HepG2 (cell line): ENCODE measurements at regions of chr15 and their contacts with region 1.

Region 1: GRCh38 chr15:78241007-78241406 is 6.6 kb upstream of the ACSBG1 start:
- DNase-seq: peak; percentile 49
- ATAC-seq: peak; percentile 93
- H3K4me3 ChIP-seq: no peak overlapping the region
- H3K27ac ChIP-seq: no peak overlapping the region
- H3K4me1 ChIP-seq: peaks cover 32% of the 10 kb centered on the region
- H3K27me3 ChIP-seq: peaks cover 0 to 11% of the 10 kb centered on the region in 2 experiments; a peak in 1 of 5 replicates
- CTCF ChIP-seq: peak; percentile 92
- EP300 ChIP-seq: no peak
- POLR2A ChIP-seq: no peak
- RAD21 ChIP-seq: peak; percentile 77

Region 2: DNA sequence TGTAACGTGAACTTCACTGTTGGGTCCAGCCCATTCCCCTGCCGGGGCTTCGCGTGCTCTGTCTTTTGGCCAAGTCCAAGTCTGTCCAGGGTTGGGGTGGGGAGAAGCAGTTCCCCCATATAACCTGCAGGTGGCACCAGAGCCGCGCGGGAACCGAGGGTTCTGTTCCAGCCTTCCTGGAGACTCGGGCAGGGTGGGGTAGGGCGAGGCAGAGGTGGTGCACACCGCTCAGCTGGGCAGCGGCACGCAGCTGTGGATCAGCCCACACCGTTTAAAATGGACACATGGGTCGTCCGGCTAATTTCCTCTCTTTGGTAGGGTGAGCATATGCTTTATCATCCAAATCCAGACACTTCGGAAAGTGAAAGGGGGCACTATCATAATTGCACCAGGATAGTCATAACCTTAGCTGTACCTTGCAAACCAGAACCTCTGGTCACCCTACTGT is 281.6 kb before region 1 on chr15:
- CTCF ChIA-PET with region 1: no interaction called
- POLR2A ChIA-PET with region 1: no interaction called
- in situ Hi-C with region 1: loop called (anchors 25 kb)
- intact Hi-C with region 1: no loop called
- DNase-seq: peak; percentile 48
- ATAC-seq: peak; percentile 98
- H3K4me3 ChIP-seq: no peak overlapping the region; a peak in 1 of 6 replicates
- H3K27ac ChIP-seq: no peak overlapping the region
- H3K4me1 ChIP-seq: peaks cover 18% of the 10 kb centered on the region
- H3K27me3 ChIP-seq: no peaks in the 10 kb centered on the region
- CTCF ChIP-seq: peak; percentile 96
- EP300 ChIP-seq: no peak
- POLR2A ChIP-seq: no peak
- RAD21 ChIP-seq: peak; percentile 89

Region 3: DNA sequence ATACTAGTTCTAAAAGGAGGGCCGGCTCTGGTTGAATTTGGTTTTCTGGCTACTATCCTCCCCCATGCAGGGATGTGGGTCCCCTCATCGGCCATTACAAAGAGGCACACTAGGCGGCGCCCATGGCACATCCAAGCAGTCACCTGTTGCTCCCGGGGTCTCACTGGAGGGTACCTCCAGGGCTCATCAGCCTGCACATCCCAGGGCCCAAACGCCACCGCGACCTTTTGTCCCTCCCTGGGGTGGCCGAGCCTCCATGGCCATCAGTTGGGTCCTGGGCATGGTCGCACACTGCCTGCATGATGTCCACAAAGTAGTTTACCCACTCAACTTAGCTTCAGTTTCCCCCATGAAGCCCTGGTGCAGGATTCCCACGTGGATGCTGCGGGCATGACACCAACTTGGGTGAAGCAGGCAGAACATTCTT is 63.5 kb before region 1 on chr15:
- CTCF ChIA-PET with region 1: interaction called, 9 read pairs
- POLR2A ChIA-PET with region 1: no interaction called
- in situ Hi-C with region 1: loop called (anchors 5 kb)
- intact Hi-C with region 1: loop called (anchors 1 kb)
- DNase-seq: peak; percentile 30
- ATAC-seq: peak; percentile 70
- H3K4me3 ChIP-seq: no peak overlapping the region
- H3K27ac ChIP-seq: no peak overlapping the region
- H3K4me1 ChIP-seq: 0 out of 2 replicates have a peak, but pooled peaks cover 6% of the 10 kb centered on the region
- H3K27me3 ChIP-seq: no peaks in the 10 kb centered on the region
- CTCF ChIP-seq: peak; percentile 78
- EP300 ChIP-seq: no peak
- POLR2A ChIP-seq: no peak
- RAD21 ChIP-seq: peak; percentile 40; the same call in 1 of the 2 replicates

Region 4: GRCh38 chr15:78216708-78217107 is 24.3 kb before region 1 on chr15:
- CTCF ChIA-PET with region 1: no interaction called
- POLR2A ChIA-PET with region 1: no interaction called
- in situ Hi-C with region 1: no loop called
- intact Hi-C with region 1: no loop called
- DNase-seq: no peak
- ATAC-seq: no peak
- H3K4me3 ChIP-seq: no peak overlapping the region
- H3K27ac ChIP-seq: no peak overlapping the region
- H3K4me1 ChIP-seq: no peaks in the 10 kb centered on the region
- H3K27me3 ChIP-seq: peaks cover 0 to 10% of the 10 kb centered on the region in 2 experiments; a peak in 3 of 5 replicates
- CTCF ChIP-seq: no peak
- EP300 ChIP-seq: no peak
- POLR2A ChIP-seq: no peak
- RAD21 ChIP-seq: no peak